ENCODE measurements at regions of chr11 and their contacts with region 1.

Region 1: DNA sequence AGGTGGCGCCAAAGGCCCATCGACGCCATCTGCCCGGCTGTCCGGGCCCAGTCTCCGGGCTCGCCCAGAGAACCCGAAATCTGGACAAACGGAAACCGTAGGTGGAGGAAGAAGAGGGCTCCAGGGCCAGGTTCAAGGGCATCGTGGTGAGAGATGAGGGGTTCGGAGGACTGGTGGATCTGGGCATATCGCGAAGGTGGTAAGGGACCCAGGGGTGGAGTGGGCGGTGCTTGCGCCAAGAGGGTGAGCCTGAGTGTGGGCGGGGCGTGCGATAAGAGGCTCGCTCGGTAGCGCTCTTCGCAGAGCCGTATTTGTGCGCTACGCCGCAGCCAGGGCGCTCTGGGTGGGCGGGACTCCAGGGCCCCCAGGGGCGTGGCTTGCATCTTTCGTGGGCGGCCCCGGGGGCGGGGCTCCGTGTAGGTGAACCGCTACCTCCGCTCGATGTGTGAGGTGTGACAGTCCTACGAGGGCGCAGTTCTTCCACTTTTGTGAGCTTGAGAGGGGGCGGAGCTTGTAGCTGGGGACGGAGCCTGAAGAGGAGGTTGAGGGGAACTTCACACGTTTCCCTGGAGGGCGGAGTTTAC is 4.8 kb downstream of the CD248 start:
- DNase-seq: peak; percentile 95 to 97 (median 97)
- H3K4me3 ChIP-seq: peak overlapping the region; percentile 45 to 77 (median 70)
- H3K27ac ChIP-seq: peak overlapping the region in 1 of 2 experiments; percentile 73
- H3K4me1 ChIP-seq: peaks cover 0 to 32% (median 30%) of the 10 kb centered on the region in 4 experiments
- H3K27me3 ChIP-seq: peaks cover 0 to 2% (median 0%) of the 10 kb centered on the region in 5 experiments

Region 2: DNA sequence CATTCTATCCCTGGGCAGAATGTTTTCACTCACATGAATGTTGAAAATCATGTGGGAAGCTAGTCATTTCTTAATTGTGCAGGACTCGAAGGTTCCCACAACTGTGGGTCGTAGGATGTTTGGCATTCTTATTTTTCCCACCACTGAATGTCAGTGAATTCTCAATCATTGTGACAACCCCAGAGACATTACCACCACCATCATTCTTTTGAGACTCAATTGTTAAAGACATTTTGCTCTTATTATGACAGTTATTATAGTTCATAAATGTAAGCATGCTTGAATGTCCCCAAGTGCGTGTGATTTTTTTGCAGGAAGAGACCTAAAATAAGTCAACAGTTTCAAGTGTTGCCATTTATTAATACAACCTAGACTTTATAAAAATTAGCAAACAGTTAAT is 223.0 kb before region 1 on chr11:
- CTCF ChIA-PET with region 1: no interaction called
- POLR2A ChIA-PET with region 1: no interaction called
- DNase-seq: no peak
- H3K4me3 ChIP-seq: no peak overlapping the region
- H3K27ac ChIP-seq: no peak overlapping the region
- H3K4me1 ChIP-seq: peaks cover 0 to 15% (median 5%) of the 10 kb centered on the region in 4 experiments
- H3K27me3 ChIP-seq: no peaks in the 10 kb centered on the region

Region 3: DNA sequence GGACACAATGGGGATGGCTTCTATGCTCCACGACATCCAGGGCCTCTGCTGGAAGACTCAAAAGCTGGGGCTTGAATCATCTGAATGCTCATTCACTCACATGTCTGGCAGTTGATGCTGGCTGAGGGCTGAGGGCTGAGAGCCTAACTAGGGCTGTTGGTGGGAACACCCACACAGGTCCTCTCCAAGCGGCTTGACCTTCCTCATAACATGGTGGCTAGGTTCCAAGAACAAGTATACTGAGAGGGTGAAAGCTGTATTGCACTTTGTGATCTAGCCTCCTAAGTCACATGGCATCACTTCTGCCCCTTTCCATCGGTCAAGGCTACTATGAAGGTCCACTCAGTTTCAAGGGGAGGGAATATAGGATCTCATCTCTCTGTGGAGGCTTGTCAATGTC is 12.9 kb before region 1 on chr11:
- CTCF ChIA-PET with region 1: interaction called, 46 read pairs
- POLR2A ChIA-PET with region 1: no interaction called
- DNase-seq: no peak
- H3K4me3 ChIP-seq: no peak overlapping the region
- H3K27ac ChIP-seq: no peak overlapping the region
- H3K4me1 ChIP-seq: no peaks in the 10 kb centered on the region
- H3K27me3 ChIP-seq: peaks cover 0 to 12% (median 9%) of the 10 kb centered on the region in 5 experiments

Region 4: GRCh38 chr11:66328307-66329144 is 16.5 kb after region 1 on chr11:
- CTCF ChIA-PET with region 1: interaction called, 86 read pairs
- POLR2A ChIA-PET with region 1: interaction called, 3 read pairs
- DNase-seq: peak; percentile 71 to 85 (median 78)
- H3K4me3 ChIP-seq: peak overlapping the region in 3 of 7 experiments; percentile 7 to 29 (median 22)
- H3K27ac ChIP-seq: no peak overlapping the region
- H3K4me1 ChIP-seq: peaks cover 0 to 37% (median 24%) of the 10 kb centered on the region in 4 experiments
- H3K27me3 ChIP-seq: no peaks in the 10 kb centered on the region

Region 5: GRCh38 chr11:66336234-66337102 is 24.4 kb after region 1 on chr11 and contains the start of gene RIN1:
- CTCF ChIA-PET with region 1: interaction called, 86 read pairs
- POLR2A ChIA-PET with region 1: interaction called, 3 read pairs
- DNase-seq: peak; percentile 48 to 88 (median 84)
- H3K4me3 ChIP-seq: peak within 1 kb of the TSS in 6 of 7 experiments; percentile 8 to 74 (median 49)
- H3K27ac ChIP-seq: no peak within 1 kb of the TSS
- H3K4me1 ChIP-seq: peaks cover 0 to 22% (median 20%) of the 10 kb centered on the region in 4 experiments
- H3K27me3 ChIP-seq: peaks cover 0 to 2% (median 0%) of the 10 kb centered on the region in 5 experiments

Region 6: DNA sequence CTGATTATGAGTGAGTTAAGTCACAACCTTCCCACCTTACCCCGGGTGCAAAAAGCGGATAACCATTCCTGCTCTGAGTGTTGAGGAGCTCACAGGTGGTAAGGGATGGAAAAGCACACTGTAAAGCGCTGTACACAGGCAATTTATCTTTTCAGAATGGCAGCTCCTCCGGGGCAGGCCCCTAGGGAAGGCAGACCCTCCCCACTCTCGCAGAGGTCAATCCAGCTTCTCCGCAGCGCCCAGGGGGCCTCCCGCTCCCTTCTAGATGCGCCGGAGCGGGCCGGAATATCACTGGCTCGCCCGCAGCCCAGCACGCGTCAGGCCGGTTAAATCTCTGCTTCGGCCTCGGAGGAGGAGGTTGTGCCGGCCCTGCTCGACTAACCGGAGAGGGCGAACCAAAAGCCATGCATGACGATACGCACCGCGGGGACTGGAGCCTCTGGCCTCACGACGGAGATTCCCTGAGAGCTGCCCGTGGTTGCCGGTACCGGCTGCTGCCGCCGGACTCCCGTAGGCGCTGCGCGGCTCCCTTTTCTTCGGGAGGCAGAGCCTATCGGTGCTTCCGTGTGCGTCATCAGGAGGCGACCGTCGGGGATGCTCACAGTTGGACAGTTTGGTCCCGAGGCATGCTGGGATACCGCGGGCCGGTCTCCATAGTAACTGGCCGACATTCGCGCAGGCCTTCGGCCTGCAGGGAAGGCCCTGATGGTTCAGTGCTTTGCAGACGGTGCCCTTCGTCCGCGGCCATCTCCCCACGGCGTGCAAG is 32.7 kb after region 1 on chr11 and contains the start of gene BRMS1:
- CTCF ChIA-PET with region 1: interaction called, 52 read pairs
- POLR2A ChIA-PET with region 1: interaction called, 3 read pairs
- DNase-seq: peak; percentile 97 to 98 (median 98)
- H3K4me3 ChIP-seq: peak within 1 kb of the TSS; percentile 46 to 99 (median 91)
- H3K27ac ChIP-seq: peak within 1 kb of the TSS; percentile 87 to 91
- H3K4me1 ChIP-seq: peaks cover 6 to 41% (median 32%) of the 10 kb centered on the region in 4 experiments
- H3K27me3 ChIP-seq: no peaks in the 10 kb centered on the region

Region 7: DNA sequence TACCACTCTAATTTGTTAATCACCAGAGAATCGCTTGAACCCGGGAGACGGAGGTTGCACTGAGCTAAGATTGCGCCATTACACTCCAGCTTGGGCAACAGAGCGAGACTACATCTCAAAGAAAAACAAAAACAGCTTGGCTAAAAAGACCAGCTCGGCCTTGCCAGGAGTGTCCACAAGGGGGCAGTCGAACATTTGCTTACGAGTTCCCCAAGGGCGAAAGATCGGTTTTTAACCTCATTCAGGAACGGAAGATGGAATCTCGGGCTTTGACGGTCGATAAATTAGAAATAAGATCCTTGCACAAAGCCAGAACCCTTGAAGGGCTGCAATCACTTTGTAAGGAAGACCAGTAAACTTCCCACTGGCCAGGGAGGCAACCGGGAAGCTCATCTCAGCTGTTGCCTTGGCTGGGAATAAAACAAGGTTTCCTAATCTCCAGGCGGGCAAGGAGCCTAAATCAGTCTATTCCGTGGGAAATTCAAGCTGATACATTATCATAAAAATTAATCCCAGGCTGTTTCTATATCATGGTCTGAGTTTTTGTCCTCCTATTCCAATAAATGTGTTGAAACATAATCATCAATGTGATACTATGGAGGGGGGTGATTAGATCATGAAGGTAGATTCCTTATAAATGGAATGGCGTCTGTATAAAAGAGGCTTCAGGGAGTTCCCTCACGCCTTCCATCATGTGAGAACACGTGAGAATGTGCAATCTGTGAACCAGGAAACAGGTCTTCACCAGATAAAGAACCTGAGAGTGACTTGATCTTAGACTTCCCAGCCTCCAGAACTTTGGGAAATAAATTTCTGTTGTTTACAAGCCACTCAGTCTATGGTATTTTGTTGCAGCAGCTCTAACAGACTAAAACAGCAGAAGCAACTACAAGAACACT is 74.4 kb after region 1 on chr11:
- CTCF ChIA-PET with region 1: interaction called, 12 read pairs
- POLR2A ChIA-PET with region 1: no interaction called
- DNase-seq: peak; percentile 78 to 90 (median 79)
- H3K4me3 ChIP-seq: peak overlapping the region in 4 of 7 experiments; percentile 35 to 63 (median 49)
- H3K27ac ChIP-seq: no peak overlapping the region
- H3K4me1 ChIP-seq: peaks cover 0 to 7% (median 4%) of the 10 kb centered on the region in 4 experiments
- H3K27me3 ChIP-seq: peaks cover 0 to 7% (median 0%) of the 10 kb centered on the region in 5 experiments

Measured in common myeloid progenitor, CD34-positive (primary cell).